Heart left ventricle (tissue), 16 donors: ENCODE measurements at regions of chr9 and their contacts with region 1.

Region 1: DNA sequence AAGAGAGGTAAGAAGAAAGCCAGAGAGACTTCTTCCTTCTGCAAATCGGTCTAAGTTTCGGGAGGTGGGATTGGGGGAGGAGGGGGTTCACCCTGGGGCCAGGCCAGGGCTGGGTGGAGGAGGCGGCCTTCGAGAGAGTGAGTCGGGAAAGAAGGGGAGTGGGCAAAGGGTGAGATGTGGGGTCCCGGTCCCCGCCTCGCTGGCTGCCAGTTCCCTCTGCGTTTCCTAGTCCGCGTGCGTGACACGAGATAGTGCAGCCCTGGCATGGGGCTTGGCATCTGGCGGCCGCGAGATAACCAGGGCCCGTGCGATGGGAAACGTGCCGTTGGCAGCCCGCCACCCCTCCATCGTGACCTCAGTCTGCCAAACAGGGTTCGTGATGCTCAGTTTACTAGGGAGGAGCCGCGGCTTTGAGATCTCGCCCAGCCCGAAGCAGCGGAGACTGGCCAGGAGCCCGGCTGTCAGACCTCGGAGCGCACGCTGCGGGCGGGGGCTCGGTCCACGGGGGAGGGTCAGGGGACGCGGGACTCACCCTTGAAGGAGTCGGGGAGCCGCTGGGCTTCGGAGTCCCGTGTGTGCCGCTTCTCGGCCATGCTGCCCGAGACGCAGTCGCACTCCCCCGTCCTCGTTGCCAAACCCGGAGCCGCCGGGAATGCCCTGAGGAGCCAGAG is at the start of gene STOM:
- DNase-seq: peak; percentile 89 to 95 (median 93)
- ATAC-seq: peak; percentile 63 to 86 (median 74)
- H3K4me3 ChIP-seq: peak within 1 kb of the TSS; percentile 19 to 88 (median 78)
- H3K27ac ChIP-seq: peak within 1 kb of the TSS; percentile 91 to 99 (median 96)
- H3K4me1 ChIP-seq: peaks cover 12 to 78% (median 69%) of the 10 kb centered on the region in 12 donors
- H3K27me3 ChIP-seq: no peaks in the 10 kb centered on the region
- CTCF ChIP-seq: no peak
- POLR2A ChIP-seq: peak; percentile 94 to 100
- total RNA-seq, gene STOM: 125 to 239 (median 154) TPM

Region 2: DNA sequence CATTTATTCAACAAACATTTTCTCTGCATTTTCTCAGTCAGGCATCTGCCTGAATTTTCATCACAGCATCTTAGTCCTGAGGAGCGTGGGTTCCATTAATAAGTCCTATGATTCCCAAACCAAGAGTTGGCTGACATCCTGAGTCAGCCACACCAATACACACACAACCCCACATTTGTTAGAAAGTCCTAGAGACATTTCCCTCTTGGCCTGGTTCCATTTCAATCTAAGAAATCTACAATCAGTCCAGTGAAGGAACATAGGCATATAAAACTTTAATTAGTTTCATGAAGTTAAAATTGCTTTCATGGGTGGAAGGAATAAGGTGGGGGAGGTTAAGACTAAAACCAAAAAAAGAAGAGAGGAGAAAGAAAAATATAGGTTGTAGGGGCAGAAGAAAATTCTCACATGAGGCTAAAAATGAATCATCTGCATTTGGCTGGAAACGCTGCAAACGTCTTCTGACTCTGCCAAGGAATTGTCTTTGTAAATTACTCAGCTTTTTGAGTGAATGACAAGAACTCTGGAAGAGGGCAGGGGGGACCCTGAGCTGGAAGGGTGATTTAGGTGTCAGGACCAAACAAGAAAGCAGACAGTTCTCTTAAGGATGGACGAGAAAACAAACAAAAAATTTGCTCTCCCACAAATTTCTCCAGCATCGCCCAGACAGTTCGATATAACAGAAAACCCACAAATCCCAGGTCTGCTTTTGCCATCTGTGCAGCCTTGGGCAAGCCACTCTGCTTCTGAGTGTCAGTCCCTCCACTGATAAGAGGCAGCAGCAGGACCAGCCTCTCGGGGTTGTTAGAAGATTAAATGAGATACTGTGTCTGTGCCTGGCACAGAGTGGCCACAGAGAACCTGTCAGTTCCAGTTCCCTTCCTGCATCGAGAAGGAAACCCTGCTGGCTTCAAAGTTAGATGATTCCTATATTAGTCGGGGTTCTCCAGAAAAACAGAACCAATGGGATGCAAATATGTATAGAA is 1079.4 kb before region 1 on chr9:
- intact Hi-C with region 1: no loop called
- DNase-seq: no peak
- ATAC-seq: no peak
- H3K4me3 ChIP-seq: no peak overlapping the region
- H3K27ac ChIP-seq: no peak overlapping the region
- H3K4me1 ChIP-seq: no peaks in the 10 kb centered on the region
- H3K27me3 ChIP-seq: no peaks in the 10 kb centered on the region
- CTCF ChIP-seq: no peak
- POLR2A ChIP-seq: no peak

Region 3: DNA sequence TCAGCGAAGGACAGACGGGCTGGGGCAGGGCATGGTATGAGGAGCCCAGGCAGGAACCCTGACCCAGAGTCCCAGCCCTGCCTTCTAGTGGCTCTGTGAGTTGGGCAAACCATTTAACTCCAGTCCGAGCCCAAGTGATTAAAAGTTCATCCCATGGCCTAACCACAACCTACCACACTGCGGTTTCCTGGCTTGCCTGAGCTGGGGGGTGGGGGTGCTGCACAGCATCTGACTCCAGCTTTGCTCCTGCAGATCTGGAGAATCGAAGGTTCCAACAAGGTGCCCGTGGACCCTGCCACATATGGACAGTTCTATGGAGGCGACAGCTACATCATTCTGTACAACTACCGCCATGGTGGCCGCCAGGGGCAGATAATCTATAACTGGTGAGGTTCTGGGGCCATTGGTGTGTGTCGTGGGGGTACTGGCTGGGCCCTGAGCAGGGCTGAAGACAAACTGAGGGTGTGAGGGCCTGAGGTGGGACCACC is 48.7 kb before region 1 on chr9:
- intact Hi-C with region 1: loop called in 5 of 10 experiments (anchors 1 to 2 kb)
- DNase-seq: peak in 1 of 5 donors; percentile 26
- ATAC-seq: no peak
- H3K4me3 ChIP-seq: no peak overlapping the region
- H3K27ac ChIP-seq: peak overlapping the region in 11 of 12 donors; percentile 26 to 98 (median 85)
- H3K4me1 ChIP-seq: peaks cover 10 to 88% (median 67%) of the 10 kb centered on the region in 12 donors
- H3K27me3 ChIP-seq: no peaks in the 10 kb centered on the region
- CTCF ChIP-seq: no peak
- POLR2A ChIP-seq: no peak

Region 4: GRCh38 chr9:121326130-121326838 is 43.4 kb before region 1 on chr9:
- intact Hi-C with region 1: loop called in 5 of 10 experiments (anchors 1 to 2 kb)
- DNase-seq: peak; percentile 89 to 95 (median 92)
- ATAC-seq: peak; percentile 89 to 94 (median 94)
- H3K4me3 ChIP-seq: peak overlapping the region in 3 of 12 donors; percentile 9 to 29 (median 22)
- H3K27ac ChIP-seq: peak overlapping the region; percentile 80 to 98 (median 93)
- H3K4me1 ChIP-seq: peaks cover 6 to 94% (median 54%) of the 10 kb centered on the region in 12 donors
- H3K27me3 ChIP-seq: no peaks in the 10 kb centered on the region
- CTCF ChIP-seq: no peak
- POLR2A ChIP-seq: peak in 1 of 2 donors; percentile 40

Region 5: GRCh38 chr9:121350993-121351561 is 18.7 kb before region 1 on chr9:
- intact Hi-C with region 1: loop called in 1 of 10 experiments (anchors 2 kb)
- DNase-seq: peak in 4 of 5 donors; percentile 77 to 85 (median 80)
- ATAC-seq: peak; percentile 48 to 62 (median 58)
- H3K4me3 ChIP-seq: peak overlapping the region in 1 of 12 donors; percentile 5
- H3K27ac ChIP-seq: peak overlapping the region; percentile 35 to 97 (median 90)
- H3K4me1 ChIP-seq: peaks cover 19 to 94% (median 73%) of the 10 kb centered on the region in 12 donors
- H3K27me3 ChIP-seq: no peaks in the 10 kb centered on the region
- CTCF ChIP-seq: no peak
- POLR2A ChIP-seq: no peak